Vagina (tissue), 2 donors: ENCODE measurements at regions of chr1 and their contacts with region 1.

Region 1: GRCh38 chr1:222680080-222680479 is 32.2 kb downstream of the AIDA start:
- DNase-seq: no peak
- H3K4me3 ChIP-seq: no peak overlapping the region
- H3K27ac ChIP-seq: no peak overlapping the region
- H3K4me1 ChIP-seq: no peaks in the 10 kb centered on the region
- H3K27me3 ChIP-seq: no peaks in the 10 kb centered on the region
- CTCF ChIP-seq: no peak
- POLR2A ChIP-seq: no peak

Region 2: GRCh38 chr1:222704260-222704659 is 24.2 kb after region 1 on chr1:
- intact Hi-C with region 1: loop called (anchors 2 kb)
- DNase-seq: no peak
- H3K4me3 ChIP-seq: no peak overlapping the region
- H3K27ac ChIP-seq: no peak overlapping the region
- H3K4me1 ChIP-seq: peaks cover 15% of the 10 kb centered on the region
- H3K27me3 ChIP-seq: no peaks in the 10 kb centered on the region
- CTCF ChIP-seq: no peak
- POLR2A ChIP-seq: no peak

Region 3: GRCh38 chr1:222861062-222861461 is 181.0 kb after region 1 on chr1:
- intact Hi-C with region 1: no loop called
- DNase-seq: no peak
- H3K4me3 ChIP-seq: no peak overlapping the region
- H3K27ac ChIP-seq: no peak overlapping the region
- H3K4me1 ChIP-seq: no peaks in the 10 kb centered on the region
- H3K27me3 ChIP-seq: no peaks in the 10 kb centered on the region
- CTCF ChIP-seq: no peak
- POLR2A ChIP-seq: no peak

Region 4: DNA sequence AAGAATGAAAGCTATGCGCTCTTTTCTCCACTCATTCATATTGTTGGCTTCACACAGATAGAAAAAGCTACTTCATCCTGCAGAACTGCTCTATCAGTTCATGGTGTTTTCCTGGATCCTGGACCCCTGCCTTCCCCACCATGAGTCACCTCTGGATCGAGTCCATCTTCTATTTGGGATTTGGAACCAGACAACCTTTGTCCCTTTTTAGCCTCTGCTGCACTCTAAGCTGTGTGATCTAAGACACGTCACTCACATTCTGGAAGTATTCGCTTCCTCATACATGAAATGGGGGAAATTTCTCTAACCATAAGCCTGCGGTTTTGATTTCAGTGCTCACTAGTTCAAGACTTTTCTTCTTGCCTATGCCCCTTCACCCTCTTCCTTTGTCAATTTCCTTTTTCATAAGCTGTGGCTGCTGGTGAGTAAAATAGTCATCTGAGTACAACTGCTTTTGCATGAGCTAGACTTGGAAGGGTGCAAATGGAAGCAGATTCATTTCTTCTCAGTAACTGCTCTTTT is 1488.8 kb after region 1 on chr1:
- intact Hi-C with region 1: no loop called
- DNase-seq: no peak
- H3K4me3 ChIP-seq: no peak overlapping the region
- H3K27ac ChIP-seq: no peak overlapping the region
- H3K4me1 ChIP-seq: peaks cover 22% of the 10 kb centered on the region
- H3K27me3 ChIP-seq: no peaks in the 10 kb centered on the region
- CTCF ChIP-seq: no peak
- POLR2A ChIP-seq: no peak